ENCODE measurements at regions of chr19 and their contacts with region 1.

Region 1: DNA sequence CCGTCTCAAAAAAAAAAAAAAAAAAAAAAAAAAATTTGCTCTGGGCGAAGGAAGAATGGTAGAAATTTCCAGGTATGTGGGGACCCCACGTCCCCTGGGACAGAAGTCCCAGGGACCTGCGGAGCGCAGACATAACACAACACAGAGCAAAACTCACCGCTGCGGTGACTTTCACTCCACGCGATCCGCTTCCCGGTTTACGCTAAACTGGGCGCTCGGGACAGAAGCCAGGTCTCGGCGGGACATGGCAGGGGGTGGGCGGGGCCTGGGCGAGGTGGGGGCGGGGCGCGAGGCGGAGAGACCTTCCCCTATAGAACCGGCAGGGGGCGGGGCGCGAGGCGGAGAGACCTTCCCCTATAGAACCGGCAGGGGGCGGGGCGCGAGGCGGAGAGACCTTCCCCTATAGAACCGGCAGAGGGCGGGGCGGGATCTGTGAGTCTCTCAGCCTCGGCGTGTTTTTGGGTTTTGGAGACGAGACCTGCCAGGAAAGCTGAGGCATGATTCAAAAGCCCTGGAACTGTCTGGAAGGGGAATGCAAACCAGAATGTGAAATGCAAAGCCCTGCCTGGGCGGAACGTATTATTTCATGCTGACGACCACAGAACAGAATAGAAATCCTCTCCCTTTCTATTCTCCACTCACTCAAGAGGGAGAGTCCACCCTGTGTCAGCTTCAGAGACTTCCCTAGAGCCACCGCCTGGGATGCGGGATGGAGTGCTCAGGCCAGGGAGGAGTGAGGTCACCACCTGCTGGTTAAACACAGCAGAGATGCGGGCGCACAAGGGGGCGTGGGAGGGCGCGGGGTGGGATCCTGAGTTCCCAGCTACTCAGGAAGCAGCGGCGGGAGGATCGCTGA is 20.2 kb upstream of the ERVV-1 start:
- DNase-seq: peak; percentile 88
- H3K4me3 ChIP-seq: peak overlapping the region; percentile 44 to 52 (median 48)
- H3K27ac ChIP-seq: peak overlapping the region; percentile 68 to 87 (median 80)
- H3K4me1 ChIP-seq: peaks cover 0 to 25% (median 18%) of the 10 kb centered on the region in 4 donors
- H3K27me3 ChIP-seq: no peaks in the 10 kb centered on the region
- CTCF ChIP-seq: peak in 3 of 4 experiments; percentile 25 to 81 (median 59)
- EP300 ChIP-seq: no peak
- POLR2A ChIP-seq: no peak

Region 2: DNA sequence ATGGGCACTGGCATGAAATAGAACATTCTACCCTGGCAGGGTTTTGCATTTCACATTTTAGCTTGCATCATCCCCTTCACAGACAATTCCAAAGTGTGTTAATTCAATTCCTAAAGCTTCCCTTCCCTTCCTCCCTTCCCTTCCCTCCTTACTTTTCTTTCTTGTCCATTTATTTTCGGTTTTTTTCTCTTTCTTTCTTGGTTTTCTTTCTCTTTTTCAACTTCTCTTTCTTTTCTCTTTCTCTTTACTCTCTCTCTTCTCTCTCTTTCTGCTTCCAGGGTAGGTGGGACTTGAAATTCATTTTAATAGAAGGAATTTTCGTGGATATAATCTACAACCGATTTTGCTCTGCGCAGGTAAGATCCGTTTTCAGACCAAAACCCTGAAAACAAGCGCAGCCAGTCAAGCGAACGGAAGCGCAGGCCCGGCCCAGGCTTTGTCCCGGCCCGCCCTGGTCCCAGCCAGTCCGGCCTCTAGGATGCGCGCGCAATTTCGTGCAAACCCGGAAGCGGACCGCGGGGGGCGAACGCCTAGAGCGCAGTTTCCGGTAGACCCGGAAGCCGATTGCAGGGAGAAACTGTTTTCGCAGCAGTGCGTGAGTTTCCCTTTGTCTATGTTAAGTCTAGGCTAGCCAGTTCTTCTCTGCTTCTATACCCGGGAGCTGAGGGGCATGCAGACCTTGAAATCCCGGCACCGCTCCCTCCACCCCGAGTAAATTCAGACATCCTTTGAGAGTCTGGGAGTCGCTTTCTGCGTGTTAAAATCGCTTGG is 596.1 kb before region 1 on chr19 and contains the start of gene ZNF528:
- intact Hi-C with region 1: no loop called
- DNase-seq: peak; percentile 97
- H3K4me3 ChIP-seq: peak within 1 kb of the TSS; percentile 52 to 72 (median 66)
- H3K27ac ChIP-seq: peak within 1 kb of the TSS; percentile 63 to 81 (median 68)
- H3K4me1 ChIP-seq: peaks cover 0 to 19% (median 18%) of the 10 kb centered on the region in 4 donors
- H3K27me3 ChIP-seq: no peaks in the 10 kb centered on the region
- CTCF ChIP-seq: no peak
- EP300 ChIP-seq: peak in 1 of 4 donors; percentile 45
- POLR2A ChIP-seq: peak in 1 of 2 donors; percentile 38
- total RNA-seq, gene ZNF528: 15.5 to 27.4 (median 20.2) TPM

Region 3: DNA sequence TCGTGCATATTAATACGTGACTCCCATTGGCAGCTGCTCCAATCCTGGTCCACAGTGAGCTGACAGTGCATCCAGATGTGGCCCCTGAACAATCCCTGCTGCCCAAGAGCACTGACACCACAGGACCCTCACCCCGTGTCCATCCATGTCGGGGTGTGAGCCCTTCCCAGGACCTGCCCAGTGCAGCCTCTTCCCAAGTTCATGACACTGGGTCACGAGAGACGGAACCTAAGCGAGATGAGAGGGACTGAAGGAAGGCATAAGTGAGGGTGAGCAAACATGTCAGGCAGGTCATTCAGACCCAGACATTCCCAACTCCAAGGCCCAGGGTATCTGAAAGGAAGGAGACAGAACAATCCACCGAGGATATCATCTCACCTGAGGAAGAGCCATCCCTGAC is 139.7 kb before region 1 on chr19:
- intact Hi-C with region 1: loop called (anchors 5 kb)
- DNase-seq: no peak
- H3K4me3 ChIP-seq: no peak overlapping the region
- H3K27ac ChIP-seq: no peak overlapping the region
- H3K4me1 ChIP-seq: peaks cover 0 to 14% (median 3%) of the 10 kb centered on the region in 4 donors
- H3K27me3 ChIP-seq: no peaks in the 10 kb centered on the region
- CTCF ChIP-seq: no peak
- EP300 ChIP-seq: no peak
- POLR2A ChIP-seq: no peak

Region 4: DNA sequence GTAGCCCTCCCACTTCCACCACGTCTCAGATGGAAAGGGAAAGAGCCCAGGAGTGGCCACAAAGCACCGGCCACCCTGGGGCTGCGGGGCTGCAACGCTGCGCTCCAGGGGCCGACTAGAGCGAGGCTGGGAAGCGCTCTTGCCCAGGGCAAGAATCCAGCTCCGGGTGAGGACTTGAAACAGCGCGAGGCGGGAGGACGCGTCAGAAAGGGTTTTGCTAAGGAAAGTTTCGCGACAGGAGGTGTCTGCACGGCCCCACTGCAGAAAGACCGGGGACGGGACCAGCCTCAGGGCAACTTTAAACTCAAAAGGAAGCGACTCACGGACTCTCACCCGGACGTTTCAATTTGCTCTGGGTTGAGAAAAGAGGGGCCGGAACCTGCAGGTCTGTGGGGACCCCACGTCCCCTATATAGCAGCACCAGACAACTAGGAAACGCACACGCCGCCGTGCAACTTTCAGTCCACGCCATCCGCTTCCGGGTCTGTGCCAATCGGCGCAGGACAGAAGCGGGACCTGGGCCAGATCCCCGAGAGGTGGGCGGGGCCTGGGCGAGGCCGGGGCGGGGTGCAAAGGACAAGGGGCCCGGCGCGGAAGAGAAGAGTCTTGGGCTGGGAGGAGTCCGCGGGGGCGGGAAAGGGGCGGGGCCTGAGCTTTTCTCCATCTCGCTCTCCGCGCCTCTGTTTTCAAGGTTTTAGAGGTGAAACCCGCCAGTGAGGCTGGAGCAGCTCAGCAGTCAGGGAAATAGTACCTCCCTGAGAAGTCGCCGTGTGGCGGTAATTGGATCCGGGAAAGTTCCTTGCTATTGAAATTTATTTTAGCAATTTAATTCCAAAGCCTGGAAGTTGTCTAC is 30.9 kb before region 1 on chr19 and contains the start of gene ZNF816:
- intact Hi-C with region 1: loop called (anchors 2 kb)
- DNase-seq: peak; percentile 99
- H3K4me3 ChIP-seq: peak within 1 kb of the TSS; percentile 52 to 73 (median 62)
- H3K27ac ChIP-seq: peak within 1 kb of the TSS; percentile 85 to 87 (median 86)
- H3K4me1 ChIP-seq: peaks cover 0 to 18% (median 12%) of the 10 kb centered on the region in 4 donors
- H3K27me3 ChIP-seq: no peaks in the 10 kb centered on the region
- CTCF ChIP-seq: no peak
- EP300 ChIP-seq: no peak
- POLR2A ChIP-seq: peak in 1 of 2 donors; percentile 52
- total RNA-seq, gene ZNF816: 3.6 to 8.4 (median 6.1) TPM

Region 5: DNA sequence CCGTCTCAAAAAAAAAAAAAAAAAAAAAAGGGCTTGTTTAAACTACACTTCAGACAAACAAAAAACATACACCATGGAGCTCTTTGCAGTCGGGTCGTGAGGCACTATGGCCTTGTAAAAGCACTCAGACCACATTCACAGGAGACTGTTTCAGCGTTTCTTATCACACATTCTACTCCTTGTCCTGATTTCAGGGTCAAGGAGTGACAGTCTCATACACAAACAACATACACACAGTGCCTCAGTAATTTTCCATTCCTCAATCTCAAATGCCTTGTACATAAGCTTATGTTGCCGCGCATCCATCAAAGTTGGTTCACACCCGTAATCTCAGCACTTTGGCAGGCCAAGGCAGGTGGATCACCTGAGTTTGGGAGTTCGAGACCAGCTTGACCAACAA is 18.9 kb before region 1 on chr19:
- intact Hi-C with region 1: no loop called
- DNase-seq: no peak
- H3K4me3 ChIP-seq: no peak overlapping the region
- H3K27ac ChIP-seq: no peak overlapping the region
- H3K4me1 ChIP-seq: no peaks in the 10 kb centered on the region
- H3K27me3 ChIP-seq: no peaks in the 10 kb centered on the region
- CTCF ChIP-seq: no peak
- EP300 ChIP-seq: no peak
- POLR2A ChIP-seq: no peak

Region 6: GRCh38 chr19:53103198-53103944 is 109.8 kb after region 1 on chr19 and contains the start of gene ZNF160:
- intact Hi-C with region 1: loop called (anchors 2 kb)
- DNase-seq: peak; percentile 99
- H3K4me3 ChIP-seq: peak within 1 kb of the TSS; percentile 60 to 86 (median 75)
- H3K27ac ChIP-seq: peak within 1 kb of the TSS; percentile 86 to 94 (median 90)
- H3K4me1 ChIP-seq: peaks cover 0 to 21% (median 16%) of the 10 kb centered on the region in 4 donors
- H3K27me3 ChIP-seq: no peaks in the 10 kb centered on the region
- CTCF ChIP-seq: no peak
- EP300 ChIP-seq: no peak
- POLR2A ChIP-seq: peak; percentile 79 to 81
- total RNA-seq, gene ZNF160: 20.9 to 70.3 (median 31.8) TPM

Region 7: GRCh38 chr19:53132141-53132991 is 138.8 kb after region 1 on chr19 and contains the start of gene ZNF415:
- intact Hi-C with region 1: loop called (anchors 10 kb)
- DNase-seq: peak; percentile 88
- H3K4me3 ChIP-seq: peak within 1 kb of the TSS; percentile 47 to 84 (median 72)
- H3K27ac ChIP-seq: peak within 1 kb of the TSS; percentile 76 to 83 (median 80)
- H3K4me1 ChIP-seq: peaks cover 0 to 26% (median 14%) of the 10 kb centered on the region in 4 donors
- H3K27me3 ChIP-seq: no peaks in the 10 kb centered on the region
- CTCF ChIP-seq: no peak
- EP300 ChIP-seq: no peak
- POLR2A ChIP-seq: peak; percentile 21 to 27
- total RNA-seq, gene ZNF415: 10.7 to 16.9 (median 13.0) TPM